ENCODE measurements at regions of chr1 and their contacts with region 1.

Region 1: GRCh38 chr1:162633081-162633762 is 958 bp downstream of the DDR2 start:
- DNase-seq: no peak
- H3K4me3 ChIP-seq: peak overlapping the region; percentile 58 to 70
- H3K27ac ChIP-seq: peak overlapping the region; percentile 87 to 90
- H3K4me1 ChIP-seq: peaks cover 0 to 20% of the 10 kb centered on the region in 2 donors
- H3K27me3 ChIP-seq: no peaks in the 10 kb centered on the region
- CTCF ChIP-seq: no peak

Region 2: GRCh38 chr1:162310337-162310736 is 322.9 kb before region 1 on chr1:
- intact Hi-C with region 1: no loop called
- DNase-seq: no peak
- H3K4me3 ChIP-seq: no peak overlapping the region
- H3K27ac ChIP-seq: no peak overlapping the region
- H3K4me1 ChIP-seq: no peaks in the 10 kb centered on the region
- H3K27me3 ChIP-seq: no peaks in the 10 kb centered on the region
- CTCF ChIP-seq: no peak

Region 3: DNA sequence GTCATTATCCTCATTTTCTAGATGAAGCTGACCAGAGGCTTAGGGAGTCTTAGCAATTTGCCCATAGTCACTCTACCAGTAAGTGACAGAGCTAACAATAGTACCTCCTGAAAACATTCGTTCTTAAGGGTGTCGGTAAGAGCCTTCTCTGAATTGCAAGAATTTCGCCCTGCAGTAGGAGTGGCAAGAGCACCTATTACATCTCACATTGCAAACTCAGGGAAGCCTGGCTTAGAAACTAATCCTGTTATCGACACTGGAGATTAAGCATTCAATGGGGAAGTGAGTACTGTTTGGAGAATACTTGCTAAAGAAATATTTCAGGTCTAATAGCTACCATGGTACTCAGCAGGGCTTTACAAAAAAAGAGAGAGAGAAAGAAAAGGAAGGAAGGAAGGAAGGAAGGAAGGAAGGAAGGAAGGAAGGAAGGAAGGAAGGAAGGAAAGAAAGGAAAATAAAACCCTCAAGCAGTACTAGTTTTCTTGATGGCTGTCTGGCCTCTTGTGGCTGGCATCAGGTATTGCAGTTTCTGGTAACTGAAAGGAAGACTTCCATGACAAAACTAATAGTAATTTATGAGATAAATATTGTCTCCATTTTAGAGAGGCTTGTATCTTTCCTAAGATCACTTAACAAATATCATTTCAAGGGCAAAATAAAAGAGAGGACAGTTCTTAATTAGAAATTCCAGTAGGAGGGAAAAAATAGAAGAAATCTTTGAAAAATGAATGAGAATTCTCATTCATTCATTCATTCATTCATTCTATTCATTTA is 241.2 kb before region 1 on chr1:
- intact Hi-C with region 1: no loop called
- DNase-seq: no peak
- H3K4me3 ChIP-seq: no peak overlapping the region
- H3K27ac ChIP-seq: no peak overlapping the region
- H3K4me1 ChIP-seq: no peaks in the 10 kb centered on the region
- H3K27me3 ChIP-seq: no peaks in the 10 kb centered on the region
- CTCF ChIP-seq: peak; percentile 64 to 76 (median 71)

Region 4: GRCh38 chr1:162612606-162613400 is 20.4 kb before region 1 on chr1:
- intact Hi-C with region 1: loop called (anchors 1 kb)
- DNase-seq: no peak
- H3K4me3 ChIP-seq: no peak overlapping the region
- H3K27ac ChIP-seq: peak overlapping the region; percentile 63 to 77
- H3K4me1 ChIP-seq: peaks cover 3 to 12% of the 10 kb centered on the region in 2 donors
- H3K27me3 ChIP-seq: no peaks in the 10 kb centered on the region
- CTCF ChIP-seq: no peak

Region 5: GRCh38 chr1:162670928-162671663 is 37.9 kb after region 1 on chr1:
- intact Hi-C with region 1: loop called (anchors 5 kb)
- DNase-seq: no peak
- H3K4me3 ChIP-seq: no peak overlapping the region
- H3K27ac ChIP-seq: peak overlapping the region; percentile 74 to 78
- H3K4me1 ChIP-seq: peaks cover 2 to 21% of the 10 kb centered on the region in 2 donors
- H3K27me3 ChIP-seq: no peaks in the 10 kb centered on the region
- CTCF ChIP-seq: no peak

Region 6: DNA sequence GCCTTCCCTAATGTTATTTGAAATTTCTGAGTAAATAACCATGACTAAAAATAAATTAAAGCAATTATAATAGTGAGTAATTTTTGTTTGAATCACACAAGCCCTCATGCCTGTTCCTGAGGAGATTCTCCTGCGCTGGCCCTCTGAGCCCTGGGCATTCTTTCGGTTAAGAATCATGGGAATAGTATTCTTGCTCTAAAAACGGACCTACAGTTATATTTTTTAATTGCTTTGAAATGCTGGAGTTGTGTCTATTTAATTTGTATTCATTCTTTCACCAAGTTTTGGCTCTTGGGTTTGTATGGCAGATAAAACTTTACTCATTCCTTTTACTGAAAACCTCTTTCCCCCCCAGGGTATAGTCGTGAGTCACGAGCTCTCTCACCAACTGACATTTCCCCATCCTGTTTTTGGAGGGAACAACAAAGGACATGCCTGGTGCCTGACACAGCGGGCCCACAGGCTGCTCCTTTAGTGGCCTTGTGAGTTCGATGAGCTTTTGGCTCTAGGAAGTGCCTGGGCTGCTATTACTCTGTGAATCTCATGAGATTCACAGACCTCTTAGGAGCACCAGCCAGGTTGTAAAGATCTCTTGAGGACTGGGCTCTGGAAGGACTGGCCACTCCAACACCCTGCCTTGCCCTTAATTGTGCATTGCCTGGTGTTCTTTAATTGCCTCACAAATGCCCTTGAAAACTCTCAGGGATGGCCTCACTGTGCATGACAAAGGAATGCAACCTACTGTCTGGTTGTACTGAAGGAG is 57.6 kb after region 1 on chr1:
- intact Hi-C with region 1: loop called (anchors 2 kb)
- DNase-seq: peak; percentile 36 to 93
- H3K4me3 ChIP-seq: no peak overlapping the region
- H3K27ac ChIP-seq: peak overlapping the region; percentile 52 to 70
- H3K4me1 ChIP-seq: peaks cover 8 to 24% of the 10 kb centered on the region in 2 donors
- H3K27me3 ChIP-seq: no peaks in the 10 kb centered on the region
- CTCF ChIP-seq: no peak

Region 7: DNA sequence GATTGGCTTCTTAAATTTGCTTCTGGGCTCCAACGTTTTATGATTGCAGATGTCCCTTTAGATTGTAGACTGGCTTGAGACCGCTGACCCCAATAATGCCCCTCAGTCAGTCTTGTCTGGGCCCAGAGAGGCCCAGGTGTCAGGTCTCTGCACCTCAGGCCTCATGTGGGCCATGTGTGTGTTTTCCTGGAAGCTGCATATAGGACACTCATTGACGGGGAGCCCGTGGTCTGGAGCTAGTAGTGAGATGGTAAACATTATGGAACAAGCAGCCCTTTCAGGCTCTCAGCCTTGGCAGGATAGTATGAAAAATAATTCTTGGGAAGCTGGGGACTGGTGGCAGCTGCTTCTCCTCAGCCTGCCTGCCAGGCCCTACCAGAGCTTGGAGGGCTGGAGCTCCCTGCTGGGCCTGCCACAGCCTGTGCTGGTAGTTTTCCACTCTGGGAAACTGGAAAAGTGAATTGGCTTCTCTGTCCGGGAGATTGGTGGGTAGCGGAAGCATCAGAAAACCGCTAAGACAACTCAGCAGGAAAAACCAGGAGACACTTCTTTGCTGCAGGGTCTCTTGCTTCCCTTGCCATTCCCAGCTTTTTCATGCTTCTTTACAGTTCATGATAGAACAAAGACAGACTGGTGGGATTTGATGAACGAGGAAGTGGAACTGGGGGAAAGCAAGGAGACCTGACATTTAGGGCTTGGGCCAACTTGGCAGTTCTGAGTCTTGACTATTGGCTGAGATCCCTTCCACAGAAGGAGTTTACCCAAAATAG is 99.5 kb after region 1 on chr1:
- intact Hi-C with region 1: loop called (anchors 5 kb)
- DNase-seq: no peak
- H3K4me3 ChIP-seq: peak overlapping the region in 1 of 2 donors; percentile 45
- H3K27ac ChIP-seq: peak overlapping the region; percentile 73 to 89
- H3K4me1 ChIP-seq: peaks cover 8 to 18% of the 10 kb centered on the region in 2 donors
- H3K27me3 ChIP-seq: no peaks in the 10 kb centered on the region
- CTCF ChIP-seq: no peak

Measured in ascending aorta (tissue), 2 donors.